Psoas muscle (tissue), 8 donors: ENCODE measurements at regions of chr18 and their contacts with region 1.

Region 1: DNA sequence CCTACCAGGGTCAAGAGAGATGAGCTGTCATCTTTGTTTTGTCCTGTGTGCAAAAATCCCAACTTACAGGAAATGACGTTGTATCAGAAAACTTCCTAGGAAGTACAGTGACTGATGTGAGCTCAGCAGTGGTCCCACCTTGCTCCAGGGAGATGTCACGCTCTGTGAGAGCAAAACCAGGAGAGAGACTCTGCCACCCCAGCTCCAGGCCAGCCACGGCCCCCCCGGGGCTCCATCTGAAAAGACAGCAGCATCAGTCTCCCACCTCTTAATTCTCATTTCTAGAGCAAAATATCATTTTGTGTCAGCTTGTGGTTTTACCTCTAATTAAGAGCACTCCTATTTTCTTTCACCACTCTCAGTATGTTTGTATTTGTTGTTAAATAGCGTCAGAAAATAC is 57.5 kb downstream of the MYL12B start:
- DNase-seq: no peak
- ATAC-seq: no peak
- H3K4me3 ChIP-seq: no peak overlapping the region
- H3K27ac ChIP-seq: no peak overlapping the region
- H3K4me1 ChIP-seq: no peaks in the 10 kb centered on the region
- H3K27me3 ChIP-seq: no peaks in the 10 kb centered on the region
- CTCF ChIP-seq: no peak

Region 2: DNA sequence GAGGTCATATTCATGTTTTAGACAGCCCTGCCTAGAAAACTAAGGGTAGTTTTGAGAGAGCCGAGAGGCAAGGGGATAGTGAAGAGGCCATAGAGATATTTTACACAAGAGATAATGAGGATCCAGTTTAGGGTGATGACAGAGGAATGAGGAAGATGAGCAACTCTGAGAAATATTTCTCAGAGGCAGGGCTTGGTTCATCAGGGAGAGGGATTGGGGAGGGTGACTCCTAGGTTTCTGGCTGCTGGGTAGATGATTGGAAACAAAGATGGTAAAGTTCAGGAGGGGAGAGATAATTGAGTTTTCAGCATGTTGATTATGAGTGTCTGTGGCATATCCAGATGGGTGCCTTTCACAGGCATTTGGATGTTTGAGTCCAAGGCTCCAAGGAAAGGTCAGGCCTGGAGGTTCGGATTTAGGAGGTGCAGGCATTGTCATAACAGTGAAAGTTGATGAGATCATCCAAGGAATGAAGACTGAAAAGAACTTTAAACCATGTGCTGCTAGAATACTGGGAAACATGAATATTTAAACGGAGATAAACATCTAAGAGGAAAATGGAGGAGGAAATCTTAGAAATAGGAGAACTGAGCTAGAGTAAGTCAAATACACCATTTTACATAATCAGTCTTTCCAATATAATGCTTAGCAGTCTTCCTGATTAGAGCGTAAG is 50.0 kb before region 1 on chr18:
- intact Hi-C with region 1: no loop called
- DNase-seq: no peak
- ATAC-seq: peak; percentile 25 to 45 (median 38)
- H3K4me3 ChIP-seq: no peak overlapping the region
- H3K27ac ChIP-seq: no peak overlapping the region
- H3K4me1 ChIP-seq: peaks cover 59% of the 10 kb centered on the region
- H3K27me3 ChIP-seq: no peaks in the 10 kb centered on the region
- CTCF ChIP-seq: no peak

Region 3: GRCh38 chr18:3281456-3282400 is 37.7 kb before region 1 on chr18:
- intact Hi-C with region 1: no loop called
- DNase-seq: no peak
- ATAC-seq: peak; percentile 69 to 86 (median 74)
- H3K4me3 ChIP-seq: no peak overlapping the region
- H3K27ac ChIP-seq: no peak overlapping the region
- H3K4me1 ChIP-seq: peaks cover 9% of the 10 kb centered on the region
- H3K27me3 ChIP-seq: no peaks in the 10 kb centered on the region
- CTCF ChIP-seq: peak; percentile 75

Region 4: GRCh38 chr18:3424280-3424890 is 105.0 kb after region 1 on chr18:
- intact Hi-C with region 1: loop called (anchors 5 to 10 kb)
- DNase-seq: no peak
- ATAC-seq: no peak
- H3K4me3 ChIP-seq: no peak overlapping the region
- H3K27ac ChIP-seq: no peak overlapping the region
- H3K4me1 ChIP-seq: no peaks in the 10 kb centered on the region
- H3K27me3 ChIP-seq: no peaks in the 10 kb centered on the region
- CTCF ChIP-seq: no peak